Dorsolateral prefrontal cortex (tissue), 120 donors: ENCODE measurements at regions of chr5 and their contacts with region 1.

Region 1: GRCh38 chr5:114361724-114362196 is at the start of gene KCNN2:
- DNase-seq: peak; percentile 80 to 94 (median 92)
- H3K4me3 ChIP-seq: peak within 1 kb of the TSS; percentile 63 to 93 (median 80)
- H3K27ac ChIP-seq: peak within 1 kb of the TSS in 57 of 59 donors; percentile 4 to 93 (median 78)
- H3K27me3 ChIP-seq: peaks cover 0 to 14% (median 0%) of the 10 kb centered on the region in 45 donors
- CTCF ChIP-seq: peak in 5 of 56 donors; percentile 6 to 21 (median 12)
- total RNA-seq, gene KCNN2: 12.0 to 45.6 (median 28.9) TPM

Region 2: GRCh38 chr5:114055318-114056184 is 306.2 kb before region 1 on chr5:
- intact Hi-C with region 1: loop called in 1 of 2 experiments (anchors 10 kb)
- DNase-seq: peak; percentile 34 to 81 (median 65)
- H3K4me3 ChIP-seq: peak overlapping the region; percentile 37 to 71 (median 59)
- H3K27ac ChIP-seq: peak overlapping the region in 15 of 59 donors; percentile 9 to 65 (median 33)
- H3K27me3 ChIP-seq: peaks cover 0 to 15% (median 0%) of the 10 kb centered on the region in 45 donors
- CTCF ChIP-seq: peak in 9 of 56 donors; percentile 2 to 30 (median 14)